Activated naive CD4-positive, alpha-beta T cell treated with anti-CD3 and anti-CD28 coated beads for 36 hours (primary cell): ENCODE measurements at regions of chr4 and their contacts with region 1.

Region 1: DNA sequence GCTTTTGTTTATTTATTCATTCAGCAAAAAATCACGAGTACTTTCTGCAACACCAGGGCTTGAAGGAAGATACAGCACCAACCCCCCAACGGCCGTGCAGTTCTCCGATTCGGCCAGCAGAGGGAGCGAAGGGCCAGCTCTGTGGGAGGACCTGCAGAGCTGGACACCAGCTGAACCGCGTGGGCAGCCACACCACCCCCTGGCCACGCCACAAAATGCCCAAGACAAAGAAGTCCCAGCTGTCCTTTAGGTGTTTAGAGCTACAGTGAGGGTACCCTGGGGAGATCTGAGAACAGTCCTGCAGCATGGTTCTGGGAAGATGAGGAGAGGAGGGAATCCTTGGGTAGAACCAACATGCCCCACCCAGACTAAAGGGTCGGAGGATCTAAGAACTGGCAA is 83.1 kb downstream of the RELL1 start:
- DNase-seq: peak; percentile 87
- H3K4me3 Mint-ChIP-seq: no peak overlapping the region
- H3K27ac Mint-ChIP-seq: no peak overlapping the region
- H3K4me1 Mint-ChIP-seq: peaks cover 3% of the 10 kb centered on the region
- H3K27me3 Mint-ChIP-seq: no peaks in the 10 kb centered on the region

Region 2: DNA sequence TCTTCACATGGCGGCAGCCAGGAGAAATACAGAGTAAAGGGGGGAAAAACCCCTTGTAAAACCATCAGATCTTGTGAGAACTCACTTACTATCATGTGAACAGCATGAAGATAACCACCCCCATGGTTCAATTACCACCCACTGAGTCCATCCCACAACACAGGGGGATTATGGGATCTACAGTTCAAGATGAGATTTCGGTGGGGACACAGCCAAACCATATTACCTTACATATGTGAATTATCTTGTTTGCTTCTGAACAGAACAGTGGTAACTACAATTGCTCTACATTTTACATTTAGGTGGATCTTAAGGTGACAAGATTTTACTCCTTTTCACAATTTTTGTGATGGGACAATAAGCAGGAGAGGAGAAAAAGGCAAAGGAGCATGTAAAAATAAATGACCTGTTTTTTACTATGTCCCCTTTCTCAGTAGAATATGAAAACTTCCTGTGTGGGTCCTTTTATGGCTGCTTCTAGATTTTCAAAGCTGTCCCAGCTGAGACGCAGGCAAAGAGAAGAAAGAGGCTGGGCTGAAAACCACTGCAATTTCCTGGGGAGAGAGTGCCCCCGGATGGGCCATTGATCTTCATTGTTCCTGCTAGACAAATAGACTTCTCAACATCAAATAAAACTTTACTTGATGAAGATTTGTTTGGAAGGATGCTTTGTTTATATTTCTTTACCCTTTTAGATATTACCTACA is 177.5 kb after region 1 on chr4:
- CTCF ChIA-PET with region 1: interaction called, 17 read pairs
- intact Hi-C with region 1: loop called (anchors 1 kb)
- DNase-seq: peak; percentile 75
- H3K4me3 Mint-ChIP-seq: no peak overlapping the region
- H3K27ac Mint-ChIP-seq: peak overlapping the region; percentile 66
- H3K4me1 Mint-ChIP-seq: peaks cover 21% of the 10 kb centered on the region
- H3K27me3 Mint-ChIP-seq: no peaks in the 10 kb centered on the region

Region 3: DNA sequence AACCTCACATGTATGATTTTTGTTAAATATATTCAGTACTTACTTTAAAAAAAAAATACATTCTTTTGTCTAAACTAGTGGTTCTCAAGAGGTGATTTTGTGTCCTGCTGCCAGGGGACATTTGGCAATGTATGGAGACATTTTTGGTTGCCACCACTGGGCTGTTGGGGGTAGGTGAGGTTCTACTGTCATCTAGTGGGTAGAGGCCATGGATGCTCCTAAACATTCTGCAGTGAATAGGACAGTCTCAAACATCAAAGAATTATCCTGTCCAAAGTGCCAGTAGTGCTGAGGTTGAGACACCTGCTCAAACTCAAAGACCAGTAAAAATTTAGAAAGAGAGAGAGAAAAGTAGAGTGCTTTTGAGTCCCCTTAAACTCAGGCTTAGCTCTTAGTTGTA is 190.5 kb after region 1 on chr4:
- CTCF ChIA-PET with region 1: interaction called, 19 read pairs
- intact Hi-C with region 1: loop called (anchors 2 kb)
- DNase-seq: peak; percentile 22
- H3K4me3 Mint-ChIP-seq: no peak overlapping the region
- H3K27ac Mint-ChIP-seq: no peak overlapping the region
- H3K4me1 Mint-ChIP-seq: no peaks in the 10 kb centered on the region
- H3K27me3 Mint-ChIP-seq: no peaks in the 10 kb centered on the region

Region 4: DNA sequence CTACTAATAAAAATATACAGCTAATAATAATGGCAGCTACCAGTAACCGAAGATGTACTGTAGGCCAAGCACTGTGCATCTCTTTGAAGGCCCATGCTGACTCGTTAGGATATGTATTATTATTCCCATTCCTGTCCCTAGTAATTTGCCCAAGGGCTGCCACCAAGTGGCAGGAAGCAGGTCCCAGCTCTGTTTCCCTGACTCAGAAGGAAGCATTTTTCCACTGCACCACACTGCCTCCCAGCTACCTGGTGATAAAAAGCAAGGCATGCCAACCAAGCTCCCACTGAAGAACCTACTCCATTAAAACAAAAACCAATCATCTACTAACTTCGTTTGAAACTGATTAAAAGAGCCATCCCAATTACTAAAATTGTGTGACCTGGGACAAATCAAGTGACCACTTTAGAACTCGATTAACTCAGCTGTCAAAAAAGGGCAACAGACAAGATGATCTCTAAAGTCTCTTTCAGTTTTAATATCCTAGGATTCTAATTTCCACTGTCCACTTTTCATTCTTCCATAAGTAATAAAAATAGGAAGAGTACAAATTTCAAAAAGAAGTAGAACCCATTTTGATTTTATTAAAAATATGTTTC is 199.1 kb after region 1 on chr4:
- CTCF ChIA-PET with region 1: interaction called, 4 read pairs
- intact Hi-C with region 1: loop called (anchors 1 kb)
- DNase-seq: peak; percentile 46
- H3K4me3 Mint-ChIP-seq: no peak overlapping the region
- H3K27ac Mint-ChIP-seq: no peak overlapping the region
- H3K4me1 Mint-ChIP-seq: no peaks in the 10 kb centered on the region
- H3K27me3 Mint-ChIP-seq: no peaks in the 10 kb centered on the region

Region 5: DNA sequence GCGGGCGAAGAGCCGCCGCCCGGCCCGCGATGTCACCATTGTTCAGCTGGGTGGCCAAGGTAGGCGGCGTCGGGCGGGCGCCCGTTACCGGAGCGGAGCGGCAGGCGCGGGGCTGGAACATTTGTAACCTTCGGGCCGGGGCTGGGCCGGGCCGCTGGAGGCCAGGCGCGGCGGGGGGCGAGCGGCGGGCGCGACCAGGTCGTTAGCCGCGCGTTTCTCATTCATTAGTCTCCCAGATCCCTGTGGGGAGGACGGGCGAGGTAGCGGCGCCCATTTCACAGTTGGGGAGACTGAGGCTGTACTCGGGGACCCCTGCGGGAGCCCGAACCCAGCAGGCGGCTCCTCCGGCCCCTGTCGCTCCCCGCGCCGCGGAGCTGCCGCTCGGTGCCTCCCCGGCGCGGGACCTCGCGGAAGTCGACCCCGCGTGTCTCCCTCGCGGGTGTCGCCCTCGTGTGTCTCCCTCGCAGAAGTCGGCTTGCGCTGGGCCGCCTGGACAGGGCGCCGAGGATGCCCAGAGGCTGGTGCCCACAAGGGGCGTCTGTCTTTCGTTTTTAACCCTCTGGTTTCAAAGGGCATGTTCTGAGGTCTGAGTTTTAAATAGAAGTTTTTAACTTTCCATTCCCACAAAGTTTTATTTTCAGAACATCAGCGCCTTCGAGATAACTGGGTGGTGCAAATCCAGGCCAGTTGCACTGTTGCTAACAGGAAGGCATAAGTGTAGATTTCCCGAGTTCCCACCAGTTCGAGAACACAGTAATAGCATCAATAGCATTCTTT is 374.6 kb after region 1 on chr4:
- CTCF ChIA-PET with region 1: no interaction called
- intact Hi-C with region 1: loop called (anchors 2 kb)
- DNase-seq: peak; percentile 83
- H3K4me3 Mint-ChIP-seq: peak overlapping the region; percentile 77
- H3K27ac Mint-ChIP-seq: peak overlapping the region; percentile 26
- H3K4me1 Mint-ChIP-seq: peaks cover 27% of the 10 kb centered on the region
- H3K27me3 Mint-ChIP-seq: no peaks in the 10 kb centered on the region

Region 6: DNA sequence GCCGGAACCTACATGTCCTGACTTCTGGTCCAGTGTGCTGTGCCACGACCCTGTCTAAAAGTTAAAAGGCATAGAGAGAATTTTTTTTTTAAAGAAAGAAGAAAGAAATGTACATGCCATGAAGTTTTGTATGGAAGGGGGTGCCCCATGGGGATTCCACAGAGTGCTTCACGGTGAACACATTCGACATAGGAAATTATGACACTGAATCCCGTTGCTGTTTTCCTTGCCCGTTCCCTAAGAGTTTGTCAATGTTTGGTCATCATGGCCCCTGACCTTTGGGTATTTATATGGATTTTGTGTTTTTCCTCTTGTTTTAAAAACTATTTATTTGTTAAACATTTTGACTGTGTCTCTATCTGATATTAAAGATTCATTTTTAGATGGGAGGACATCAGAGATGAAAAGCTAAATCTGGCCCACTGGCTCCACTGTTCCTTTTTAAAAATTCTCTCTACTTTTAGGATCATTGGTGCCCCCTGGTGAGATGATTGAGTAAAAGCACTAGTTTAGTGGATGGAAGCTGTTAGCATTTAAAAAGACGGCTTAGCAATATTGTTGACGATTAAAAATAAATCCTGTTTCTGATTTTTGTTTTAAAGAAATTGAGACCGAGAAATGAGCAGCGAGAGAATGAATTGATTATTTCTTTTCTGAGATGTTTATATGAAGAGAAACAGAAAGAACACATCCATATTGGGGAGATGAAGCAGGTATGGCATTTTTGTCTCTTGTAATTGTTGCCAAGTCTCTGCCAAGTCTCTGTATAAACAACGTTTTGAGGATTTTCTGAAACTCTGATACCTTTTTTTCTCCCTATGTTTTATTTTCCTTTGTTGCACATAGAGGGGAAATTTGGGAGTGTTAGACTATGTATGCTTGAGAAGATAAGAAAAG is 432.2 kb after region 1 on chr4:
- CTCF ChIA-PET with region 1: interaction called, 7 read pairs
- intact Hi-C with region 1: loop called (anchors 1 kb)
- DNase-seq: peak; percentile 49
- H3K4me3 Mint-ChIP-seq: no peak overlapping the region
- H3K27ac Mint-ChIP-seq: no peak overlapping the region
- H3K4me1 Mint-ChIP-seq: no peaks in the 10 kb centered on the region
- H3K27me3 Mint-ChIP-seq: no peaks in the 10 kb centered on the region